Mucosa of descending colon (tissue), 3 donors: ENCODE measurements at regions of chr2 and their contacts with region 1.

Region 1: GRCh38 chr2:70948337-70949003 is 12.8 kb downstream of the ATP6V1B1 start:
- DNase-seq: peak; percentile 66 to 84 (median 80)
- ATAC-seq: peak; percentile 89
- H3K4me3 ChIP-seq: no peak overlapping the region
- H3K4me1 ChIP-seq: peaks cover 3% of the 10 kb centered on the region
- CTCF ChIP-seq: peak; percentile 76

Region 2: GRCh38 chr2:70861777-70862625 is 86.5 kb before region 1 on chr2:
- intact Hi-C with region 1: loop called in 1 of 2 experiments (anchors 5 kb)
- DNase-seq: peak; percentile 60 to 88 (median 83)
- ATAC-seq: peak; percentile 90
- H3K4me3 ChIP-seq: no peak overlapping the region
- H3K4me1 ChIP-seq: peaks cover 4% of the 10 kb centered on the region
- CTCF ChIP-seq: peak; percentile 88